Ascending aorta (tissue), 2 donors: ENCODE measurements at regions of chr14 and their contacts with region 1.

Region 1: GRCh38 chr14:101964297-101965144 is at the start of gene DYNC1H1:
- DNase-seq: peak; percentile 77 to 96
- H3K4me3 ChIP-seq: peak within 1 kb of the TSS; percentile 100
- H3K27ac ChIP-seq: peak within 1 kb of the TSS; percentile 93 to 95
- H3K4me1 ChIP-seq: peaks cover 2 to 6% of the 10 kb centered on the region in 2 donors
- H3K27me3 ChIP-seq: no peaks in the 10 kb centered on the region
- CTCF ChIP-seq: no peak
- total RNA-seq, gene DYNC1H1: 577 TPM

Region 2: GRCh38 chr14:101809671-101810514 is 154.6 kb before region 1 on chr14:
- intact Hi-C with region 1: no loop called
- DNase-seq: peak; percentile 72 to 94
- H3K4me3 ChIP-seq: peak overlapping the region; percentile 73 to 90
- H3K27ac ChIP-seq: peak overlapping the region; percentile 97 to 98
- H3K4me1 ChIP-seq: peaks cover 6 to 27% of the 10 kb centered on the region in 2 donors
- H3K27me3 ChIP-seq: no peaks in the 10 kb centered on the region
- CTCF ChIP-seq: no peak

Region 3: DNA sequence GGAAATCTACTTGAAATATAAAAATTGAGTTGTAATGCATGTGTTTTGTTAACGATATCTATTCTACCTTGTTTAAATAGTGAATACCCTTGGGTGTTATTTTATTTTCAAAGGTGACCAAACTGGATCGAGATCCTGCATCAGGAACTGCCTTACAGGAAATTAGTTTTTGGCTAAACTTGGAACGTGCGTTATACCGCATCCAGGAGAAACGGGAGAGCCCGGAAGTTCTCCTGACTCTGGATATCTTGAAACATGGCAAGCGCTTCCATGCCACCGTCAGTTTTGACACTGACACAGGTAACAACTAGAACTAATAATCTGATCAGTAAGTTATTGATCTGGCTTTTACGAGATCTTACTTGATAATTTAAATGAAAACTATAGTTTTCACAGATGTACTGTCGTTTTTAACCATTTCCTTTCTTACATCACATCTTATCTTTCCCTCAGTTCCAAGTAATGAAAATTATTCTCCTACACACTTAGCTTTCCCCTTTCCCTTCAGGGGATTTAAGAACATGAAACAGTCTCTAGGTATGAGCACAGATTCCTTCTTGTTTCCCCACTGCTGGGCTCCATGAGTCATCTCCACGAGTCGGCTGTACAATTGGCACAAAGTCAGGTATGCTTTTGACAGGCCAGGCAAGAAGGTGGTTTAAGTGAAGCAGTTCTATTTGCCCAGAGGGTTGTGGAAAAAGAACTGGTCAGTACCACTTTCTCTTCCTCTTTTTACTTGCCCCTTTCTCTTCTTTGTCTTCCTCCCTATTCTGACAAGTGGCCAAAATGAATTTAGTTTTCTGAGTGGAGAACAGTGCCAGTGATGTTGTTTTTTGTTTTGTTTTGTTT is 16.0 kb after region 1 on chr14:
- intact Hi-C with region 1: loop called (anchors 2 kb)
- DNase-seq: peak; percentile 66 to 91
- H3K4me3 ChIP-seq: no peak overlapping the region
- H3K27ac ChIP-seq: peak overlapping the region; percentile 30 to 67
- H3K4me1 ChIP-seq: peaks cover 3 to 4% of the 10 kb centered on the region in 2 donors
- H3K27me3 ChIP-seq: no peaks in the 10 kb centered on the region
- CTCF ChIP-seq: no peak

Region 4: DNA sequence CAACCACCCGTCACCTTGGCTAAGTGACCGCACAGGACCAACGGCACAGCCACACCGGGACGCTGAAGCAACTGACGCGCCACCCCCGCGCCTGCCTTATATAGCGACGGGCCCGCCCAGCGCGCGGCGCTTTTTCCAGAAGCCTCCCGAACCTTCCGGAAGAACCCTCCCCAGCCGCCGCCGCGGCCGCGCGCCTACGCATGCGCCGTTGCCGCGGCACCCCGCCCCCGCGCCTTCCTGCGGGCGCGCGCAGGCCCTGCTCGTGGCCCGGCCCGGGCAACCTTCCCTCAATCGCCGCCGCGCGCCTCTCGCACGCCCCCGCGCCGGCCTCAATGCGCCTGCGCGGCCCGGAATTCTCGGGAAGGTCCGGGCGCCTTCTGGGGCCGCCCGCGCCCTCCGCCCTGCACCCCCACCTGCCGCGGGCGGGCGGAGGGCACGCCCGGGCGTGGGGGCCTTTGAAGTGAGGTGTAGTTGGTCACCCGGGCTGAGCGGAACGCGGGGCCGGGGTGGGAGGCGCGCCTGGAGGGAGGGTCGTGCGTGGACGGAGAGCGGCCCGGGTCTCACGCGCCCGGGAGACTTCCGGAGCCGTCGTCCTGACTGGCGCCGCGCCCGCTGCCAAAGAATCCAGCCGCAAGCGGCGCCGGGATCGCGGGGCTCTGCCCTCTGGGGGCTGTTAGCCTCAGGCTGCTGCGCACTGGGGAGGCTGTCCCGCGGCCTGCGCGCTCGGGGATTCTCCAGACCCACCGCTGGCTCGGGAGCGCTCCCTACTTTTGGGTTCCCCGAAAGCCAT is 122.6 kb after region 1 on chr14 and contains the start of gene HSP90AA1:
- intact Hi-C with region 1: loop called (anchors 2 kb)
- DNase-seq: peak; percentile 75 to 96
- H3K4me3 ChIP-seq: peak within 1 kb of the TSS; percentile 89 to 97
- H3K27ac ChIP-seq: peak within 1 kb of the TSS; percentile 98 to 100
- H3K4me1 ChIP-seq: peaks cover 13 to 37% of the 10 kb centered on the region in 2 donors
- H3K27me3 ChIP-seq: no peaks in the 10 kb centered on the region
- CTCF ChIP-seq: peak in 2 of 3 experiments; percentile 19 to 29
- total RNA-seq, gene HSP90AA1: 120 TPM

Region 5: GRCh38 chr14:102139248-102140026 is 174.9 kb after region 1 on chr14 and contains the start of gene WDR20:
- intact Hi-C with region 1: loop called (anchors 5 kb)
- DNase-seq: peak; percentile 90 to 98
- H3K4me3 ChIP-seq: peak within 1 kb of the TSS; percentile 96 to 99
- H3K27ac ChIP-seq: peak within 1 kb of the TSS; percentile 81 to 85
- H3K4me1 ChIP-seq: peaks cover 0 to 21% of the 10 kb centered on the region in 2 donors
- H3K27me3 ChIP-seq: no peaks in the 10 kb centered on the region
- CTCF ChIP-seq: no peak
- total RNA-seq, gene WDR20: 44.8 TPM